Naive thymus-derived CD4-positive, alpha-beta T cell (primary cell): ENCODE measurements at regions of chr5 and their contacts with region 1.

Region 1: DNA sequence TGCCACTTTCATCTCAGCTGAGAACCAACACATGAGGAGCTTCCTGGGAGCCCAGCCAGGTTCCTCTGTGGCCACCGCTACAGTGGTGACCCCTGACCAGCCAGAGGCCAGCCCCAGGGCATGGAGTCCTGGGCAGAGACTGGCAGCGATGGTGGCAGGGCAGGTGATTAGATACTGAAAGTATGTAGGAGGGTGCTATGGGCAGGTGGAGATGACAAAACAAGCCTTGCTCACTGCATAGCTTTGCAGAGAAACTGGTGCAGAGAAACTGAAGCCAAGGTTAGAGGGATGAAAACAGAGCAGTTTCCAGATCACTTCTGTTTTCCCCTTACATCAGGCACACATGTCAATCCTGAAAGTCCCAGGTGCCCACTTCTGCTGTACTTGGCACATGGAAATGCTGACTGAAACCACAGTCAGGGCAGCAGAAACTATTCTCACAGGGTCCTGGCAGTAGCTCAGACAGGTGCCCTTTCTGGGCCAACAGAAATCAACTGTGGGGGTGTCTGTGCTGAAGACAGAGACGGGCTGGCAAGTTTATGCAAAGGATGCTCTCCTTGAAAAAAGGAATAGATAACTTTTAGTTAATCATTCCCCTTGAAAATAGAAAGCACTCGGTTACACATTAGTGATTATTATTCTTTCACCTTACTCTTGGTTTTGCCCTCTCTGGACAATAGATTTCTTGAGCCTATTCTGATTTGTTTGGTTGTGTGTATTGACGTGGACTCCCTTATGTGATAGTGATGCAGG is 90.3 kb downstream of the ANKRD55 start:
- DNase-seq: peak in 1 of 9 donors; percentile 31
- ATAC-seq: peak; percentile 64
- H3K4me3 ChIP-seq: peak overlapping the region; percentile 24
- H3K4me3 Mint-ChIP-seq: peak overlapping the region; percentile 19 to 83 (median 77)
- H3K27ac ChIP-seq: peak overlapping the region; percentile 65
- H3K27ac Mint-ChIP-seq: peak overlapping the region; percentile 35 to 98 (median 86)
- H3K4me1 ChIP-seq: peaks cover 0 to 72% of the 10 kb centered on the region in 2 donors
- H3K4me1 Mint-ChIP-seq: peaks cover 42 to 91% (median 76%) of the 10 kb centered on the region in 7 donors
- H3K27me3 ChIP-seq: no peaks in the 10 kb centered on the region
- H3K27me3 Mint-ChIP-seq: peaks cover 0 to 2% (median 0%) of the 10 kb centered on the region in 5 donors

Region 2: GRCh38 chr5:56123531-56124243 is 19.1 kb before region 1 on chr5:
- CTCF ChIA-PET with region 1: interaction called, 3 read pairs
- POLR2A ChIA-PET with region 1: interaction called, 10 read pairs
- intact Hi-C with region 1: no loop called
- DNase-seq: no peak
- ATAC-seq: peak; percentile 29
- H3K4me3 ChIP-seq: no peak overlapping the region
- H3K4me3 Mint-ChIP-seq: peak overlapping the region in 3 of 10 donors; percentile 3 to 38 (median 29)
- H3K27ac ChIP-seq: no peak overlapping the region
- H3K27ac Mint-ChIP-seq: peak overlapping the region in 8 of 9 donors; percentile 32 to 89 (median 74)
- H3K4me1 ChIP-seq: peaks cover 0 to 42% of the 10 kb centered on the region in 2 donors
- H3K4me1 Mint-ChIP-seq: peaks cover 21 to 59% (median 45%) of the 10 kb centered on the region in 7 donors
- H3K27me3 ChIP-seq: no peaks in the 10 kb centered on the region
- H3K27me3 Mint-ChIP-seq: no peaks in the 10 kb centered on the region

Region 3: DNA sequence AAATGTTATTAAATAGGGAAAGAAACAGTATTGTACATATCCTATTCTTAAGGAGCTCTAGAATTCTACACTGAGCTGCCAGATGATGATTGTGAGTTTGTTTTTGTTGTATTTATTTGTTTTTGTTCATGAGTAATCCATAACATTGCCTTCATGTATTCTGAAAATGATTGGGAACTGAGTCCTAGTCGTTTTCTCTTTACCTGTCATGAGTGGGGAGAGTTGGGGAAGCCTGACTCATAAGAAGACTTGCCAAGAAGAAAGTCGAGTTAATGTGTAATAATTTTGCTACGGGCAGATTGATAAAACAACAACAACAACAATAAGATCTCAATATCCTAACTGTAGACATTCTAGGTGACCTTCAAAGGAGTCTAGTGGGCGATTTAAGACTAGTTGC is 13.5 kb before region 1 on chr5:
- CTCF ChIA-PET with region 1: interaction called, 3 read pairs
- POLR2A ChIA-PET with region 1: interaction called, 10 read pairs
- intact Hi-C with region 1: loop called in 1 of 2 experiments (anchors 1 kb)
- DNase-seq: no peak
- ATAC-seq: no peak
- H3K4me3 ChIP-seq: no peak overlapping the region
- H3K4me3 Mint-ChIP-seq: peak overlapping the region in 8 of 10 donors; percentile 1 to 83 (median 62)
- H3K27ac ChIP-seq: peak overlapping the region; percentile 64
- H3K27ac Mint-ChIP-seq: peak overlapping the region; percentile 88 to 98 (median 96)
- H3K4me1 ChIP-seq: peaks cover 0 to 45% of the 10 kb centered on the region in 2 donors
- H3K4me1 Mint-ChIP-seq: peaks cover 31 to 81% (median 66%) of the 10 kb centered on the region in 7 donors
- H3K27me3 ChIP-seq: no peaks in the 10 kb centered on the region
- H3K27me3 Mint-ChIP-seq: no peaks in the 10 kb centered on the region

Region 4: DNA sequence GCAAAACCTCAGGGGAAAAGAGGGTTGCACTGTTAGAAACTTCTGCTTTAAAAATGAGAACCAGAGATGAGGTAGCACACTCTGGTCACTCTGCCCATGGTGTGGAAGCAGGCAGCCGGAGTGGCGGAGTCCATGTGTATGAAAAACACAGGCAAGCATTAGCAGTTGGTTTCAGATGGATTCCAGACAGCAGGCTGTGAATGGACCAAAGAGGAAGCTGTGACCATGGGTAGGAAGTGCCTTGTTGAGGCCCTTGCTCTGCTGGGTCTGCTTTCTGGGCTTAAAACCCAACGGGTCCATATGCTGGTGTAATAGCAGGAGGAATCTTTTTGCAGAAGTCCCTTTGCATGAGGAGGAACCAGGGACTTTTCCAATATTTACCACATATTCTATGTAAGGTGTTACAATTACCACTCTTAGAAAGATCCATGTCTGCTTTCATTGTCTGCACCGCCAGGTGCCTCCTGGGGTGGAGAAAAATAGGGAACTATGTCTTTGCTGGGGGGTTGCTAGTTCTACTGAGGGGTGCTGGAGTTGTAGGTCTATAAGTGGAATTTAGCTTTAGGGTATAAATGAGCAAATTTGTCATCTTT is 13.3 kb after region 1 on chr5:
- CTCF ChIA-PET with region 1: interaction called, 14 read pairs
- POLR2A ChIA-PET with region 1: interaction called, 18 read pairs
- intact Hi-C with region 1: loop called in 1 of 2 experiments (anchors 2 kb)
- DNase-seq: no peak
- ATAC-seq: peak; percentile 48
- H3K4me3 ChIP-seq: no peak overlapping the region
- H3K4me3 Mint-ChIP-seq: peak overlapping the region; percentile 25 to 96 (median 94)
- H3K27ac ChIP-seq: peak overlapping the region; percentile 61
- H3K27ac Mint-ChIP-seq: peak overlapping the region; percentile 87 to 98 (median 95)
- H3K4me1 ChIP-seq: peaks cover 11 to 71% of the 10 kb centered on the region in 2 donors
- H3K4me1 Mint-ChIP-seq: peaks cover 60 to 89% (median 79%) of the 10 kb centered on the region in 7 donors
- H3K27me3 ChIP-seq: peaks cover 0 to 2% of the 10 kb centered on the region in 2 donors
- H3K27me3 Mint-ChIP-seq: no peaks in the 10 kb centered on the region

Region 5: DNA sequence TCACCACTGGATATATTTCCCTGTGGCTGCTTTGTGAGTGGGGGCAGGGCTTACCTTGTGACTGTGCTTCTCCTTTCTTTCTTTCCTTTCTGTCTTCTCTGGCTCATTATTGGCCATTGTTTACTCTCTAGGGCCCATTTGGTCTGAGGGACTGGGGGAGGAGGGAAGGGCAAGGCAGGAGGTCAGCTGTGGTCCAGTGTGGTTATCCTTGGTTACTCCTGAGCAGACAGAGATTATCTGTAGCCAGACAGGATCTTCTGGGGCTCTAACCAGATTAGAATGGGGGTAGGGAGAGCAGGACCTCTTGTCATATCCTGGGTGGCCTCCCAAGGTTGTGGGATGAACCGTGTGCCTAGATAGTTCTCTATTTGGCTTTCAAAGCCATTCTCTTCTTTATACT is 19.1 kb after region 1 on chr5:
- CTCF ChIA-PET with region 1: interaction called, 14 read pairs
- POLR2A ChIA-PET with region 1: interaction called, 18 read pairs
- intact Hi-C with region 1: loop called in 1 of 2 experiments (anchors 2 kb)
- DNase-seq: no peak
- ATAC-seq: no peak
- H3K4me3 ChIP-seq: no peak overlapping the region
- H3K4me3 Mint-ChIP-seq: peak overlapping the region in 5 of 10 donors; percentile 38 to 96 (median 93)
- H3K27ac ChIP-seq: peak overlapping the region; percentile 61
- H3K27ac Mint-ChIP-seq: peak overlapping the region; percentile 24 to 98 (median 95)
- H3K4me1 ChIP-seq: peaks cover 0 to 45% of the 10 kb centered on the region in 2 donors
- H3K4me1 Mint-ChIP-seq: peaks cover 42 to 93% (median 79%) of the 10 kb centered on the region in 7 donors
- H3K27me3 ChIP-seq: peaks cover 0 to 2% of the 10 kb centered on the region in 2 donors
- H3K27me3 Mint-ChIP-seq: peaks cover 0 to 2% (median 0%) of the 10 kb centered on the region in 5 donors

Region 6: DNA sequence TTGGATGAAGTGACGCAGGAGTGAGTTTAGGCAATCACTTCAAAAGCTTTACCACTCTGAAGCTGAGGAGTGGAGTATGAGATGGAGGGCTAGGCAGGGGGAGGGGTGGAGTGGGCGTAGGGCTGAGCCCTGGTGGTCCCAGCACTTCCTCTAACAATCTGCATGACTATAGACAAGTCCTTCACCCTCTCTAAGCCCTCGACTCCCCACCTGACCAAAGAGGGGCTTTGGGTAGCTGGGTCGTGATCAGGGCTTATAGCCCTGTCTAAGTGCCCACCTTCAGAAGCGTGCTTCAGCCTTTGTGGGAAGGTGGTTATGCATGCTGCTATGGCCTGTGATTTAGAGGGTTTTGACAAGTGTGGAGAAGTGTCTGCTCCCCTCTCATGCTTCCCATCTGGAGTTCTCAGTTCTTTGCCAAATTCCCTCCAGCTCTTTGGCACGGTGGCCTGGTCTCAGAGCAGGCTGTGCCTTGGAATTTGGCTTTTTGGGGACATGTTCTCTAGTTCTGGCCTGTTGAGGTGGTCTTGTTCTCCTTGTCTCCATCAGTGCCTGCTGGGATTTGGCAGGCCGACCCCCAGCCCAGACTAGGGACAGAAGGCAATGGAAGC is 1286.8 kb after region 1 on chr5:
- CTCF ChIA-PET with region 1: no interaction called
- POLR2A ChIA-PET with region 1: no interaction called
- intact Hi-C with region 1: no loop called
- DNase-seq: no peak
- ATAC-seq: no peak
- H3K4me3 ChIP-seq: no peak overlapping the region
- H3K4me3 Mint-ChIP-seq: no peak overlapping the region
- H3K27ac ChIP-seq: no peak overlapping the region
- H3K27ac Mint-ChIP-seq: no peak overlapping the region
- H3K4me1 ChIP-seq: no peaks in the 10 kb centered on the region
- H3K4me1 Mint-ChIP-seq: no peaks in the 10 kb centered on the region
- H3K27me3 ChIP-seq: no peaks in the 10 kb centered on the region
- H3K27me3 Mint-ChIP-seq: peaks cover 0 to 3% (median 0%) of the 10 kb centered on the region in 5 donors